ENCODE measurements at regions of chr1 and their contacts with region 1.

Region 1: GRCh38 chr1:226634166-226634588 is 85.6 kb downstream of the STUM start:
- DNase-seq: peak; percentile 64

Region 2: DNA sequence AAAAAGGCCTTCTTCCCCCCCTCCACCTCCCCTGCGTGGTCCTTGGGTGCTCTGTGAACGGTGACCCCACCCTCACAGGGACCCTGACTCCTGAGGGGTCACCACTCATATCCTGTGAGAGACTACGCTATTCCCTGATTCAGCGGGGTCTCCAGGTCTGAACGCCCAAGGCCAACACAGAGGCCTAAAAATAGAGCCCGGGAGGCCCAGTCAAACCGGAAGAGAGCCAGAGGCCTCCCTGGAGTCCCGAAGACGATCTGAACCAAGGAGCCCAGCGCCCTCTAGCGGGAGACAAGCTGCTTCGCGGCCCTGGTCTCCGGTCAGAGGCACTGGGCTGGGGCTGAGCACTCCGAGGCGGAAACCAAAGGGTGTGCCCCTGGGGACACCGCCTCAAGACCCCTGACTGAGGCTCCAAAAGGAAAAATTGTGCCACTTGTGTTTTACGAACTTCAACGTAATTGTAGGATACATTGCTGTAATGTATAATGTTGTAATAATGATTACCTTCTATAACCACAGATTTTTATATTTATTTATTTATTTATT is 193.9 kb after region 1 on chr1:
- in situ Hi-C with region 1: loop called (anchors 10 kb)
- DNase-seq: peak; percentile 91

Region 3: GRCh38 chr1:226940029-226940805 is 306.0 kb after region 1 on chr1 and contains the start of gene COQ8A:
- in situ Hi-C with region 1: no loop called
- DNase-seq: peak; percentile 99